ENCODE measurements at regions of chr22 and their contacts with region 1.

Region 1: GRCh38 chr22:38872172-38872830 is at the start of gene CBX6:
- DNase-seq: peak; percentile 73 to 97
- H3K4me3 ChIP-seq: peak within 1 kb of the TSS; percentile 70 to 87
- H3K27ac ChIP-seq: peak within 1 kb of the TSS; percentile 88 to 96
- H3K4me1 ChIP-seq: peaks cover 8 to 28% of the 10 kb centered on the region in 2 donors
- H3K27me3 ChIP-seq: no peaks in the 10 kb centered on the region
- CTCF ChIP-seq: no peak
- total RNA-seq, gene CBX6: 159 TPM

Region 2: DNA sequence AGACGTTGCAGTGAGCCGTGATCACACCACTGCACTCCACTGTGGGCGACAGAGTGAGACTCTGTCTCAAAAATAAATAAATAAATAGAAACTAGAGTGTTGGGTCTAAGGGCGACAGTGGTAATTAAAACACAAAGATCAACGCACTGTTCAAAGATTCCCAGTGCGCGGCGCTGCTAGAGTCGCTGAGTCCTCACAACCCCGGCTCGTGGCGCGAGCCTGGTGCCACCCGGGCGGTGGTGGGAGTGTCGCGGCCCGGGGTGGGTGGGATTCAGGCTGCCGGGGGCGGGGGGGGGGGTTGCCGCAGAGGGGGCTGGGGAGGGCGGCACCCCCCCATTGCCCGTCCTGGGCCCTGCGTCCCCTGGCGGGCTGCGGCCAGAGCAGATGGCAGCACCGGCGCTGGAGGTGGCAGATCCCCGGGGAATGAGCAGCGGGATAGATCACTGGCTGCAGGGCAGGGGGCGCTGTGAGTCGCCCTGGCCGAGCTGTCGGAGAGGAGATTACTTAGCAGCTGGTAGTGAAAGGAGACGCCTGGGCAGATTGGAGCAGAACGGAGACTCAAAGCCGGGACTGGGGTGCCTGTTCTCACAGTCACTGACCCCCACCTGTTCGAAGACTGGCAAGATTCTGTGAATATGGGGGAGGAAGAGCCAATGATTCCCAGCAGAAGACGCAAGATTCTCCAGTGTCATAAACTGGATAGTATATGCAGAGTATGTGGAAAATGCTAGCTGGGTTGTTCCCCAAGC is 54.9 kb after region 1 on chr22:
- intact Hi-C with region 1: loop called (anchors 1 kb)
- DNase-seq: peak in 1 of 2 donors; percentile 88
- H3K4me3 ChIP-seq: peak overlapping the region; percentile 56 to 61
- H3K27ac ChIP-seq: peak overlapping the region; percentile 76 to 80
- H3K4me1 ChIP-seq: peaks cover 4 to 18% of the 10 kb centered on the region in 2 donors
- H3K27me3 ChIP-seq: no peaks in the 10 kb centered on the region
- CTCF ChIP-seq: peak; percentile 33 to 83 (median 74)

Region 3: DNA sequence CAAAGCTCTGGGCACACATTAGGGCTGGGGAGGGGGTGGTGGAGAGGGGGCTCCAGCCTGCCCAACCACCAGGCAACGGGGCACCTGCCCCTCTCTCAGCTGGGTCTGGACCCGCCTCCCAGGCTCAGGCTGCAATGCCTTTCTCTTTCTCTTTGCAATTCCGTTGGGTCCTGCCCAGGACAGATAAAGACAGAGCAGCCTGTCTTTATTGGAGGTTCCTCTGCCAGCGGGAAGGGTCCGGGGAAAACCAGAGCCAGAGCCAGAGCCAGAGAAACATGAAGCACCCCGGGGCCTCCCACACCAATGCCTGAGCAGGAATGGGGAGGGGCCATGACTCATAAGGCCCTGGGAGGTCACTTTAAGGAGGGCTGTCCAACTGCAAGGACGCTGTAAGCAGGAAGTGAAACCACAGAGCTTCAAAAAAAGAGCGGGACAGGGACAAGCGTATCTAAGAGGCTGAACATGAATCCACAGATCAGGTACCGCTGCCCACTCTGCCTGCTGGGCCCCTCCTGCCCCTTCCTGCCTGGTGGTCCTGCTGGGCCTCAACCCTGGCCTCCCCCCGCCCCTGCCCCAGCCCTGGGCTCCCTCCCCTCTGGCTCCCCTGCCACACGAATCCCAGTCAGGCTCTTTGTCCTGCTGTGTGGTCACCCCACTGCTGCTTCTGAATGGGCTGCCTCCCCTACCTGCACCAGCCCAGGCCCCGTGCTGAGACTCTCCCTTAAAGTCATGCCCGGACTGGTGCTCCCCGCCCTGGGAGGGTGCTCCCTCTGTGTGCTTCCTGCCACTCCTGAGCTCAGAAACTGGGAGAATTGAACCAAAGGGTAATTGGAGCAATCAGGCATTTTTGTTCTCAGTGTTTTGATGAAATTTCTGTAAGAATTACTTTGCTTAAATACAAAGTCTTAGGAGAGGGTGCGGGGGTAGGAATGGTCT is 110.0 kb after region 1 on chr22 and contains the start of gene APOBEC3B:
- intact Hi-C with region 1: loop called (anchors 5 kb)
- DNase-seq: peak in 1 of 2 donors; percentile 95
- H3K4me3 ChIP-seq: peak within 1 kb of the TSS in 1 of 2 donors; percentile 52
- H3K27ac ChIP-seq: no peak within 1 kb of the TSS
- H3K4me1 ChIP-seq: peaks cover 0 to 10% of the 10 kb centered on the region in 2 donors
- H3K27me3 ChIP-seq: no peaks in the 10 kb centered on the region
- CTCF ChIP-seq: no peak
- total RNA-seq, gene APOBEC3B: 0.64 TPM

Region 4: GRCh38 chr22:39003165-39003638 is 130.9 kb after region 1 on chr22:
- intact Hi-C with region 1: loop called (anchors 1 kb)
- DNase-seq: peak in 1 of 2 donors; percentile 86
- H3K4me3 ChIP-seq: no peak overlapping the region
- H3K27ac ChIP-seq: peak overlapping the region in 1 of 2 donors; percentile 6
- H3K4me1 ChIP-seq: peaks cover 0 to 4% of the 10 kb centered on the region in 2 donors
- H3K27me3 ChIP-seq: no peaks in the 10 kb centered on the region
- CTCF ChIP-seq: peak; percentile 66 to 79 (median 68)

Region 5: DNA sequence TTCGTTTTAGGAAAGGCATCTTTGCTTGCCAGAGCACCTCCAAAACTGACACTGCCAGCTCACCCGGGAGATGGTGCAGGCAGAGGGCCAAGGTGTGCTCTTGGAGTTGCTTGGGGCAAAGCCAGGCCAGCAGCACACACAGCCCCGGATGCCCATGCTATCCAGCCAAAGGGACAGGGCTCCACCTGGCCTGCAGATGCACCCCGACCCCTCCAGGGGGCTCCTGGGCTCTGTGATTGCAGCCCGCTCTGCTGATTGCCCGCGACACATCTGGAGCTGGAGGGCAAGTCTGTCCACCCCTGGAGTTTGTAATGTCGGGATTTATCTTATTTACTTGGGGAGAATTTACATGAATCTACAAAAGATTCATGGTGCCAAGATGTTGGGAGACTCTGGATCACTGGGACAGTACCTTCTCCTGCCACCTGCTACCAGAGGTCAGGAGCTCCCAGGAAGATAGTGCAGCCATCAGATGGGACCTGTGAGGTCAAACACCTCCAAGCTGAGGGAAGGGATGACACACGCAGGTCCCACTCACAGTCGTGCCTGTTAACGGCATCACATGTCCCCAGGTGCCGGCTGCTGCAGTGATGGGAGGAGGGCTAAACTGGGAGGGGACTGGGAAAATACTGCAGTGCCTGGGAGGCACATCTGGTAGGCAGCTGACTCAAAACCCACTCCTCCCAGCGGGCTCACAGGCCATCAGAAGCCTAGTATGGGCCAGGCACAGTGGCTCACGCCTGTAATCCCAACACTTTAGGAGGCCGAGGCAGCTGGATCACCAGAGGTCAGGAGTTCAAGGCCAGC is 263.0 kb after region 1 on chr22:
- intact Hi-C with region 1: no loop called
- DNase-seq: no peak
- H3K4me3 ChIP-seq: no peak overlapping the region
- H3K27ac ChIP-seq: no peak overlapping the region
- H3K4me1 ChIP-seq: no peaks in the 10 kb centered on the region
- H3K27me3 ChIP-seq: no peaks in the 10 kb centered on the region
- CTCF ChIP-seq: peak in 2 of 3 experiments; percentile 11 to 15

Region 6: GRCh38 chr22:39152511-39153219 is 280.4 kb after region 1 on chr22 and contains the start of gene CBX7:
- intact Hi-C with region 1: loop called (anchors 2 kb)
- DNase-seq: peak; percentile 84 to 98
- H3K4me3 ChIP-seq: peak within 1 kb of the TSS; percentile 88 to 92
- H3K27ac ChIP-seq: peak within 1 kb of the TSS; percentile 93 to 96
- H3K4me1 ChIP-seq: peaks cover 6 to 24% of the 10 kb centered on the region in 2 donors
- H3K27me3 ChIP-seq: no peaks in the 10 kb centered on the region
- CTCF ChIP-seq: no peak
- total RNA-seq, gene CBX7: 261 TPM

Region 7: GRCh38 chr22:39253435-39254070 is 381.3 kb after region 1 on chr22:
- intact Hi-C with region 1: loop called (anchors 10 kb)
- DNase-seq: peak; percentile 55 to 88
- H3K4me3 ChIP-seq: peak overlapping the region in 1 of 2 donors; percentile 38
- H3K27ac ChIP-seq: peak overlapping the region; percentile 79 to 83
- H3K4me1 ChIP-seq: peaks cover 21 to 44% of the 10 kb centered on the region in 2 donors
- H3K27me3 ChIP-seq: no peaks in the 10 kb centered on the region
- CTCF ChIP-seq: no peak

Measured in ascending aorta (tissue), 2 donors.